ENCODE measurements at regions of chr9 and their contacts with region 1.

Region 1: DNA sequence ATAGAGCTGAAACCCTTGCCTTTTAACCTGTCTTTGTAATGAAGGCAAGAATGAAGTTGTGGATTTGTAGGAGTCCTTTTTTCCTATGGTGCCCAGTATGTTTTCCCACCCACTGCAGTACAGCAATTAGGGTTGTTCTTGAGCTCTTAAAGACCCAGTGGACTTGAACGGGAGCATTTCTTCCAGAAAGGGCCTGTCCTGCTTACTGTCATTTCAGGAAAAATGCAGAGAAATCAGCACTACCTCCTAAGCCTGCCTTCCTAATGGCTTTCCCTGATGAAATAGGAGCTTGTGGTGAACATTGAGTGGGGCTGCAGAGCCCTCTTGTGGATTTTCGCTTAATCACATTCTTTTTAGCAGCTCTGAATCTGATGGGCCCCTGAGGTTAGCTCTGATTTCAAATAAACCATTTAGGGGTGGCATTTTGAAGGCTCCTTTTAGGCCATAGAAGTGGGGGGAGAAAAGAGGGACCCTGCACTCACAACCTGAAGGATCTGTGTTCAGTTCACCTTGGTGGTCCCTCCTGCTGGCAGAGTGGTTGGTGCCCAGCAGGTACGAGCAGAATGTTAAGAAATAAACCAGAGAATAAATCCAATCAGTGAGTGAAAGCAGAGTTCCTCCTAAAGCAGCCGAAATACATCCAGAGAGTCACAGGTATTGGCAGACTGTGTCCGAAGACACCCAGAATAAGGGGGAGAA is 188.0 kb upstream of the KLF9 start:
- DNase-seq: peak; percentile 91

Region 2: DNA sequence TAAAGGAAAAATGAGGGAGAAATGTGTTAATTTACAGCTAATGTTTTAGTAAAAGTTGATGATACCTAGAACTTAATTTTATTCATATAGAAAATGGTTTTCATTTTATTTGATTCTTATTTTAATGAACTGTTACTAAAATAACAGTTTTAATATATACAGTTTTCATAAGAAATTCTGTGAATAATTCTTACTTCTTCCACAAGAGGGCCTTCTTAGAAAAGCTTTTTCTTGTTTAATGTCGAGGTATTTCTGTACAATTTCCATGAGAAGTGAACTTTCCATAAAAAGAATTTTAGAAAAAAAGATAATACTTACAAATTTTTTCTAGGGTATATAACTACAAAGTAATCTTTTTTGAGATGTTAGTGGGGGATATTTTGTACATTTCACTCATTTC is 261.9 kb before region 1 on chr9:
- in situ Hi-C with region 1: loop called (anchors 25 kb)
- DNase-seq: peak; percentile 55